OCI-LY7 (cell line): ENCODE measurements at regions of chr7 and their contacts with region 1.

Region 1: GRCh38 chr7:8035647-8036518 is 67.3 kb downstream of the GLCCI1 start:
- DNase-seq: peak; percentile 62
- H3K4me3 ChIP-seq: no peak overlapping the region
- H3K27ac ChIP-seq: no peak overlapping the region
- H3K4me1 ChIP-seq: peaks cover 10% of the 10 kb centered on the region
- CTCF ChIP-seq: peak; percentile 83

Region 2: GRCh38 chr7:7662527-7662926 is 373.4 kb before region 1 on chr7:
- CTCF ChIA-PET with region 1: no interaction called
- POLR2A ChIA-PET with region 1: no interaction called
- intact Hi-C with region 1: no loop called
- DNase-seq: no peak
- H3K4me3 ChIP-seq: no peak overlapping the region
- H3K27ac ChIP-seq: no peak overlapping the region
- H3K4me1 ChIP-seq: no peaks in the 10 kb centered on the region
- CTCF ChIP-seq: peak; percentile 58

Region 3: DNA sequence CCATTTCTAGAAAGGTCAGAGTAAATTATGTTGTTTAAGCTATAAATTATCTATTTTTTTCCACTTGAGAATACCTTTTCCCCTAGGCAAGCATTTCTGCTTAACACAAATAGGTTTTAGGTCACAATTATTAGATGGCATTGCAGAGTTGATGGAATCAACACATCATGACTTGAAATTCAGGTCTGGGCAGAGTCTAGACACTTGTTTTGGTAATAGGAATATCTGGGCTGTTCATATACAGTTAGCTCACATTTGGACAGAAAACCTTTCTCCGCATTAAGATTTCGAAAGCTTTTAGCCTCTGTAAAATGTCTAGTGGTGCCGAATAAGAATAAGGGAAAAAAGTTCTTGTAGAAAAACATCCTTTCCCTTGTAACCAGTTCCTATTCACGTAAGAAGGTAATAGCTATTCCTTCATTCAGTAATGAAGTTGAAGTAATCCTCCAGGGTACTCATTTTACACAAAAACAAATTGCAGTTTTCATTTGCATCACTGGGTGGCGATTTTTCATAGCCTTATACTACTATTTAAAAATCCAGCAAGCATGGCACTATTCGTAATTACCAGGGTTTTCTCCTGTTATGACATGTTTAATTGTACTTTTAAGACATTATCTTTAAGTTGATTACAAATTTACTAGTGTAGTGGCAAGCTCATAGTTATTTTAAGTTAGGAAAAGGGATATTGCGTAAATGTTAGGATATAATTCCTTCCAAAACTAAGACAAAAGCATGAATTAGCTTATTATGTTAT is 354.5 kb before region 1 on chr7:
- CTCF ChIA-PET with region 1: interaction called, 5 read pairs
- POLR2A ChIA-PET with region 1: interaction called, 3 read pairs
- intact Hi-C with region 1: loop called (anchors 1 kb)
- DNase-seq: peak; percentile 75
- H3K4me3 ChIP-seq: no peak overlapping the region
- H3K27ac ChIP-seq: peak overlapping the region; percentile 12
- H3K4me1 ChIP-seq: peaks cover 6% of the 10 kb centered on the region
- CTCF ChIP-seq: peak; percentile 91

Region 4: DNA sequence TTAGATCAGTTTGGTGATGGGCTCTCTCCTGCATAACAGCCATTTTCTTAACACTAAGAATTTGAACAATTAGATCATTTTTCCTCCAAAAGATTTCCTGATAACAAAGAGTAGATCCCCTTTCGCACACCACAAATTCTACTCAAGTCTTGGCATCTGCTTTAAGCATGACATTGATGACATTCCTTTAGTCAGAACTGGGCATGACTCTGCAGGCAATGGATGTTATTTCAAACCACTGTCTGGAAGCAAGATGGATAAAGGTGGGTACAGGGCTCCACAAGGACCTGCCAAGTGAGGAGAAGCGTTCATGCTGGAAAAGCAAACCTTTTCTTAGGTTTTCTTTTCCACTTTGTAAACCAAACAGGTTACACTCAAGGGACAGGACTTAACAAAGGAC is 56.3 kb after region 1 on chr7:
- CTCF ChIA-PET with region 1: no interaction called
- POLR2A ChIA-PET with region 1: no interaction called
- intact Hi-C with region 1: no loop called
- DNase-seq: no peak
- H3K4me3 ChIP-seq: no peak overlapping the region
- H3K27ac ChIP-seq: no peak overlapping the region
- H3K4me1 ChIP-seq: no peaks in the 10 kb centered on the region
- CTCF ChIP-seq: no peak